Caco-2 (cell line): ENCODE measurements at regions of chr16 and their contacts with region 1.

Region 1: DNA sequence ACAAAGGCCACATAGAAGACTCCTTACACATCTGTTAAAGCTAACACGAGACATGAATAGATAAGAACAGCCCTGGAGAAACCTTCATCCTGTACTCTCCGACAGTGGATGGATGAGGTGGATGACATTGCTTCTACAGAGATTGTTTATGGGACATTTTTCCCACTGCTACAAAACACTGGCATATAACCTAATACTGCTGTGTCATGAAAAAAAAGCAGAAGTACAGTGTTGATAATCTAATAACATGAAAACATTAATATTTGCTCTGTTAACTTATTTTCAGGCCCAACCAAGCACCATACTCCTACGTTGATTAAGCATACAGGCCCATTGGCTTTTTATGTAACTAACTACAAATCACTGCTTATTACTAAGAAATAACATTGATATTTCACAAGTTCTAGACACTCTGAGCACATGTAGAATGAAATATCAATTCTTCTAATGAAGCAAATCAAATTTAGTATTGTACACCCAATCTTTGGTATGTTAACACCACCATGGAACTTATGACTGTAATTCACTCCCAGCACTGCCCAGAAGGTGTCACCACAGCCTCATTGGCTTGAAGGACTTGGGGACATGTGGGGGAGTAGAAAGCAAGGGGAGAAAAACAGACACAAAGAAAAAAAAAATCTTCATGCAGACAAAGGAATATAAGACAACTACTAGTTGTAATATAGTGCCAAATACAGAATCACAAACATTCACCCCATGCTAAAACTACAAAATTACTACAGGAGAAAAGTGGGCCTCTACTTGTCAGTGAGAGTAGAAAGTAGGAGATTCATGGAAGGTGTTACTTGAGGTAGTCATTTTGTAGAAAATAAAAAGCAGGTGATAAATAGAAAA is 330.0 kb upstream of the PMFBP1 start:
- DNase-seq: peak; percentile 66 to 75
- H3K4me3 ChIP-seq: no peak overlapping the region
- H3K4me3 Mint-ChIP-seq: no peak overlapping the region
- H3K27ac Mint-ChIP-seq: no peak overlapping the region
- H3K4me1 ChIP-seq: no peaks in the 10 kb centered on the region
- H3K4me1 Mint-ChIP-seq: peaks cover 7% of the 10 kb centered on the region
- H3K27me3 ChIP-seq: no peaks in the 10 kb centered on the region
- H3K27me3 Mint-ChIP-seq: no peaks in the 10 kb centered on the region
- CTCF ChIP-seq: peak; percentile 91 to 92

Region 2: DNA sequence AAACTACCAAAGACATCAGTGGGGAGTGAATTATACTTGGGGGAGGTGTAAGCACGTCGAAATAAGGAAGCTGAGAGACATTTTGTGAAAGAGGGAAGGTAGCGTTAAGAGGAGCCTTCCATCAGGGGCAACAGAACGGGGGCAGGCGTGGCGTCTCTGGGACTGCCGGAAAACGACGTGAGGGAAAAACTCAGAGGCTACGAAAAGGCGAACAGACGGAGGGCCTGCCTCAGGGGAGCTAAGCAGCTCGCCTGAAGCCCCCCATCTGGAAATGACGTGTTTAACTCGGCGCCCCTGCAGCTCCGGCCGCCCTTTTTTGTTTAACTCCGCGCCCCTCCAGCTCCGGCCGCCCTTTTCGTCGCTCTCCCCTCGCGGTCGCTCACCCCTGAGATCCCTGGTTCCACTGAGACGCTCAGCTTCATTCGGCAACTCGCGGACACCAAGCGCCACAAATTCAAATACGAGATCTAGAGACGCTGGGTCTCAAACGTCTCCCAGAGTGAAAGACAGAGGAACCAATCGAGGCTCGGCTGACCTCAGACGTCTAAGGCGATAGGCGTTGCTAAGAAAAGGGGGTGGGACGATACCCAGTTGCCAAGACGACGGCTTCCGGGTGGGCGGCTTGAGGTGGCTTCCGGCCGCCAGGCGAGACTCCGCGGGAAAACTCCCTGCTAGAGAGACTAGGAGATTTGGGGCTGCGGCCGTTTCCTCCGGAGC is 162.7 kb after region 1 on chr16:
- CTCF ChIA-PET with region 1: no interaction called
- POLR2A ChIA-PET with region 1: no interaction called
- intact Hi-C with region 1: loop called (anchors 2 kb)
- DNase-seq: peak; percentile 97 to 99
- H3K4me3 ChIP-seq: peak overlapping the region; percentile 88
- H3K4me3 Mint-ChIP-seq: peak overlapping the region; percentile 89
- H3K27ac Mint-ChIP-seq: peak overlapping the region; percentile 96
- H3K4me1 ChIP-seq: no peaks in the 10 kb centered on the region
- H3K4me1 Mint-ChIP-seq: no peaks in the 10 kb centered on the region
- H3K27me3 ChIP-seq: no peaks in the 10 kb centered on the region
- H3K27me3 Mint-ChIP-seq: no peaks in the 10 kb centered on the region
- CTCF ChIP-seq: no peak

Region 3: DNA sequence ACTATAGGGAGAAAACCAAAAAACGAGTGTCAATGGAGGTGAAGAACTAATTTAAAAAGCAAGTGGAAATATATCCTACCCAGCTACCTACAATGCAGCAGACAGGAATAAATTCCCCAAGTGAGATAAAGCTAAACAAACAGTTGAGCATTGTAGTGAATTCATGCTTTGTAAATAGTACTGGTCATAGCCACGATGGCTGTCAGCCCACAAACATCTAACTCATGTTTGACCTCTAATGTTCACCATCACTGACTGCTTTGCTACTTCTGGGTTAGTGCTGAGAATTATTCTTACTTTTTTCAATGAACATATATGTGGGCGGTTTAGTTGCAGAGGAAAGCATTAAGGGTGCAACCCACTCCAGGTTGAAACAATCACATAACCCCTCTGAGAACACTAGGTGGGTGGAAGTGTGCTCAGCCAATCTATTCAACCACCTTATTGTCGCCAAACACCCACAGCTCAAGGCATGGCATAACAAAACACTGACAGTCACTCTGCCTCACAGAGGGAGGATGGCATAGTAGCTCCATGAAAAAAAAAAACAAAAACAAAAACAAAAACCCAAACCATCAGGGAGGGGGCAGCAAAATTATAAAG is 281.9 kb after region 1 on chr16:
- CTCF ChIA-PET with region 1: no interaction called
- POLR2A ChIA-PET with region 1: no interaction called
- intact Hi-C with region 1: loop called (anchors 2 kb)
- DNase-seq: peak in 1 of 2 experiments; percentile 7
- H3K4me3 ChIP-seq: no peak overlapping the region
- H3K4me3 Mint-ChIP-seq: no peak overlapping the region
- H3K27ac Mint-ChIP-seq: peak overlapping the region; percentile 47
- H3K4me1 ChIP-seq: 0 out of 2 replicates have a peak, but pooled peaks cover 4% of the 10 kb centered on the region
- H3K4me1 Mint-ChIP-seq: peaks cover 12% of the 10 kb centered on the region
- H3K27me3 ChIP-seq: no peaks in the 10 kb centered on the region
- H3K27me3 Mint-ChIP-seq: no peaks in the 10 kb centered on the region
- CTCF ChIP-seq: no peak

Region 4: GRCh38 chr16:73047518-73048291 is 545.7 kb after region 1 on chr16 and contains the start of gene ZFHX3:
- CTCF ChIA-PET with region 1: interaction called, 3 read pairs
- POLR2A ChIA-PET with region 1: no interaction called
- intact Hi-C with region 1: loop called (anchors 5 kb)
- DNase-seq: peak; percentile 87 to 89
- H3K4me3 ChIP-seq: peak within 1 kb of the TSS; percentile 92
- H3K4me3 Mint-ChIP-seq: peak within 1 kb of the TSS; percentile 73
- H3K27ac Mint-ChIP-seq: peak within 1 kb of the TSS; percentile 77
- H3K4me1 ChIP-seq: peaks cover 66% of the 10 kb centered on the region
- H3K4me1 Mint-ChIP-seq: peaks cover 37% of the 10 kb centered on the region
- H3K27me3 ChIP-seq: no peaks in the 10 kb centered on the region
- H3K27me3 Mint-ChIP-seq: no peaks in the 10 kb centered on the region
- CTCF ChIP-seq: peak in 1 of 2 experiments; percentile 34
- total RNA-seq, gene ZFHX3: 39.9 TPM in 2 replicates

Region 5: DNA sequence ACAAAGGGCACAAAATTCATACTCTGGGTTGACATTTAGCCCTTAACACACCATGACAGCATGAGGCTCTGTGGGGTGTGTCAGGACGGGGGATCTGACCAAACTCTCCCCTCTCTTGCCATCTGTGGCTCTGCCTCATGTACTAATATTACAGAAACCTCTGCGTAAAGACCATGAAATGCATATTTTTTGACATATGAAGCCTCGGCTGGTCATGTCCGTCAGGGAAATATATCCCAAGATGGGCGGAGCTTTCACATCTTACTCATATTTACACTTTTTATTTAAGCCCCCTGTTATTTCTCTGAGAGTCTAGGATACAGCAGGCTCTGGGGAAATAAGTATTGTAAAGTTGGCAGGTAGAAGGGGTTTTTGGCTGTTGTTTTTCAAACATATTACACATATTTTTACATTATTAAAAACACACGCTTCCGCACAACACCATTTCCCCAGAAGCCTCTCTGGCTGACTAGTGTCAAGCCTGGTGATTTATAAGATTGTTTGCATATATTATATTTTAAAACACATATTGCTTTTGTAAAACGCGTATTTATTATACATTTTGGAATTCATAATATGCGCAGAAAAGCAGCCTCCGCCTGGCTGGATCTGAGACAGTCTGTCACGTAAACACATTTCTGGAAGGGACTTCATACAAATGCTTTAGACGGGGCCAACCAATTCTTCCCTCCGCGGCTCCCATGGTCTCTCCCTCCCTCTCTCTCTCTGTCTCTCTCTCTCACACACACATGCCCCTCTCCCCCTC is 783.7 kb after region 1 on chr16:
- CTCF ChIA-PET with region 1: no interaction called
- POLR2A ChIA-PET with region 1: interaction called, 16 read pairs
- intact Hi-C with region 1: no loop called
- DNase-seq: no peak
- H3K4me3 ChIP-seq: no peak overlapping the region
- H3K4me3 Mint-ChIP-seq: no peak overlapping the region
- H3K27ac Mint-ChIP-seq: no peak overlapping the region
- H3K4me1 ChIP-seq: no peaks in the 10 kb centered on the region
- H3K4me1 Mint-ChIP-seq: no peaks in the 10 kb centered on the region
- H3K27me3 ChIP-seq: no peaks in the 10 kb centered on the region
- H3K27me3 Mint-ChIP-seq: peaks cover 11% of the 10 kb centered on the region
- CTCF ChIP-seq: no peak